ENCODE measurements at regions of chr21 and their contacts with region 1.

Region 1: DNA sequence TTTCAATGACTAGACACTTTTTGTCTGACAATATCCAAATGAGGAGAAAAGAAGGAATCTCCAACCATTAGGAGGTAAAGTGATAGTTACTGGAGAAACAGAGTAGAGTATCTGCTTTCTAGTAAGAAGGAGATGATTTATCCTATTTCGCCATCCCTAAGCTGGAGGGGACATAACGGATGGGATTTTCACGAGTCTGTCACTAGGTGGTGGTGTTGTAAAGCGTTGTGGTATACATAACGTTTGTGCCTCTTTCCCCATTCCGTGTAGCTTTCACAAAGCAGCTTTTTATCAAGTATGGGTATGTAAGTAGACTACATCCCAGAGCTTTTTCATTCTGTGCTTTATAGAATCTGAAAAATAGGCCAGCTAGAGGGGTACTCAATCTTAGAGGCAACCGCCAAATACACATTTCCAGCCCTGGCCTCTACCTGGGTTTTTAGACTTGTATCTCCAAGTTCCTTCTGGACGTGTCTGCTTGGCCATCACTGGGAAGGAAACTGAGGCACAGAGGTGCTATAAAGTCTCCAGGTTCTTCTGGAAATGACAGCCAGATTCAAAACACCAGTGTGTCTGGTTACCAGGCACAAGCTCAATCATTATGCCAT is 33.3 kb upstream of the FAM3B start:
- DNase-seq: no peak
- ATAC-seq: peak; percentile 93
- H3K4me3 Mint-ChIP-seq: no peak overlapping the region
- H3K27ac Mint-ChIP-seq: no peak overlapping the region
- H3K4me1 Mint-ChIP-seq: peaks cover 2% of the 10 kb centered on the region
- H3K27me3 Mint-ChIP-seq: no peaks in the 10 kb centered on the region
- CTCF ChIP-seq: no peak

Region 2: DNA sequence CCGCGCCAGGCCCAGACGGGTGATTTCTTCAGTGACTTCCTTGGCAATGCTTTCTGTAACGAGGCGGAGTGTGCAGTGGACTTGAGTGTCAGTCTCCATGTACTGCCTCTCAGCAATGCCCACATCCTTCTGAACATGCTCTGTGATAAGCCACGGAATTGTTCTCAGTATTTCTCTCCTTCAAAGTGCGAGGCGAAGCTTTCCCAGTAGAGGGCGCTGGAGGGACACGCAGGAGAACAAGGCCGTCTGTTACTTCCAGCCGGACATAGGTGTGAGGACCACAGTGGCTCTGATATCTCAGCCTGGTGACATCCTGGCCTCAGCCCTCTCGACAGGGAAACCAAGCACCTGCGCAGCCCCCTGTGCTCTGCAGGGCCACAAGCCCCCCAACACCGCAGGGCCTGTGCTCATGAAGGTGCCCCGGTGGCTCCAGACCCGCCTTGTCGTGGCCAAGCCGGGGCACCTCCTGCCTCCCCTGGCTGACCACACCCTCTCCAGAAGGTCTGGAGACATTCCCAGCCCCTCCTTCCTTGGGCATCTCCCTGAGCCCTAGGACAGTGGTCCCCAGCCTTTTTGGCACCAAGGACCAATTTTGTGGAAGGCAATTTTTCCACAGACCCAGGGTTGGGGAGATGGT is 161.4 kb before region 1 on chr21:
- CTCF ChIA-PET with region 1: no interaction called
- POLR2A ChIA-PET with region 1: no interaction called
- intact Hi-C with region 1: loop called (anchors 5 kb)
- DNase-seq: peak; percentile 41
- ATAC-seq: peak; percentile 31
- H3K4me3 Mint-ChIP-seq: no peak overlapping the region
- H3K27ac Mint-ChIP-seq: no peak overlapping the region
- H3K4me1 Mint-ChIP-seq: no peaks in the 10 kb centered on the region
- H3K27me3 Mint-ChIP-seq: peaks cover 5% of the 10 kb centered on the region
- CTCF ChIP-seq: no peak

Region 3: GRCh38 chr21:41196636-41197389 is 86.5 kb before region 1 on chr21:
- CTCF ChIA-PET with region 1: no interaction called
- POLR2A ChIA-PET with region 1: no interaction called
- intact Hi-C with region 1: no loop called
- DNase-seq: no peak
- ATAC-seq: no peak
- H3K4me3 Mint-ChIP-seq: no peak overlapping the region
- H3K27ac Mint-ChIP-seq: peak overlapping the region; percentile 63
- H3K4me1 Mint-ChIP-seq: peaks cover 75% of the 10 kb centered on the region
- H3K27me3 Mint-ChIP-seq: no peaks in the 10 kb centered on the region
- CTCF ChIP-seq: no peak

Region 4: DNA sequence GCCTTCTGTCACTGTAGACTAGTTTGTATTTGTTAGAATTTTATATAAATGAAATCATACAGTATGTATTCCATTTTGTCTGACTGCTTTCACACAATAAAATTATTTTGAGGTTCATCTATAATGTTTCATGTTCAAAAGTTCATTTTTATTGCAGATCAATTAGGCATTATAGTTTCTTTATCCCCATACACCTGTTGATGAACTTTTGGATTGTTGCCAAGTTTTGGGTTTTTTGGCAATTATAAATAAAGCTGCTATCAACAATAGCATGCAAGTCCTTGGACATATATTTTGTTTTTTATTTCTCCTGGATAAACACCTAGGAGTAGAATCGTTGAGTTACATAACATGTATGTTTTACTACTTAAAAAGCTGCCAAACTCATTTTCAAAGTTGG is 13.8 kb before region 1 on chr21:
- CTCF ChIA-PET with region 1: interaction called, 13 read pairs
- POLR2A ChIA-PET with region 1: no interaction called
- intact Hi-C with region 1: no loop called
- DNase-seq: no peak
- ATAC-seq: no peak
- H3K4me3 Mint-ChIP-seq: no peak overlapping the region
- H3K27ac Mint-ChIP-seq: no peak overlapping the region
- H3K4me1 Mint-ChIP-seq: peaks cover 3% of the 10 kb centered on the region
- H3K27me3 Mint-ChIP-seq: no peaks in the 10 kb centered on the region
- CTCF ChIP-seq: no peak

Region 5: GRCh38 chr21:41411449-41412089 is 128.3 kb after region 1 on chr21:
- CTCF ChIA-PET with region 1: interaction called, 10 read pairs
- POLR2A ChIA-PET with region 1: no interaction called
- intact Hi-C with region 1: no loop called
- DNase-seq: no peak
- ATAC-seq: peak; percentile 31
- H3K4me3 Mint-ChIP-seq: no peak overlapping the region
- H3K27ac Mint-ChIP-seq: no peak overlapping the region
- H3K4me1 Mint-ChIP-seq: peaks cover 5% of the 10 kb centered on the region
- H3K27me3 Mint-ChIP-seq: no peaks in the 10 kb centered on the region
- CTCF ChIP-seq: no peak

Region 6: GRCh38 chr21:41449613-41450012 is 166.3 kb after region 1 on chr21:
- CTCF ChIA-PET with region 1: interaction called, 165 read pairs
- POLR2A ChIA-PET with region 1: no interaction called
- intact Hi-C with region 1: no loop called
- DNase-seq: no peak
- ATAC-seq: no peak
- H3K4me3 Mint-ChIP-seq: no peak overlapping the region
- H3K27ac Mint-ChIP-seq: no peak overlapping the region
- H3K4me1 Mint-ChIP-seq: peaks cover 4% of the 10 kb centered on the region
- H3K27me3 Mint-ChIP-seq: no peaks in the 10 kb centered on the region
- CTCF ChIP-seq: no peak

Region 7: GRCh38 chr21:41768437-41769061 is 485.2 kb after region 1 on chr21:
- CTCF ChIA-PET with region 1: interaction called, 3 read pairs
- POLR2A ChIA-PET with region 1: no interaction called
- intact Hi-C with region 1: loop called (anchors 5 kb)
- DNase-seq: no peak
- ATAC-seq: no peak
- H3K4me3 Mint-ChIP-seq: peak overlapping the region; percentile 74
- H3K27ac Mint-ChIP-seq: no peak overlapping the region
- H3K4me1 Mint-ChIP-seq: peaks cover 22% of the 10 kb centered on the region
- H3K27me3 Mint-ChIP-seq: peaks cover 79% of the 10 kb centered on the region
- CTCF ChIP-seq: no peak

Region 8: DNA sequence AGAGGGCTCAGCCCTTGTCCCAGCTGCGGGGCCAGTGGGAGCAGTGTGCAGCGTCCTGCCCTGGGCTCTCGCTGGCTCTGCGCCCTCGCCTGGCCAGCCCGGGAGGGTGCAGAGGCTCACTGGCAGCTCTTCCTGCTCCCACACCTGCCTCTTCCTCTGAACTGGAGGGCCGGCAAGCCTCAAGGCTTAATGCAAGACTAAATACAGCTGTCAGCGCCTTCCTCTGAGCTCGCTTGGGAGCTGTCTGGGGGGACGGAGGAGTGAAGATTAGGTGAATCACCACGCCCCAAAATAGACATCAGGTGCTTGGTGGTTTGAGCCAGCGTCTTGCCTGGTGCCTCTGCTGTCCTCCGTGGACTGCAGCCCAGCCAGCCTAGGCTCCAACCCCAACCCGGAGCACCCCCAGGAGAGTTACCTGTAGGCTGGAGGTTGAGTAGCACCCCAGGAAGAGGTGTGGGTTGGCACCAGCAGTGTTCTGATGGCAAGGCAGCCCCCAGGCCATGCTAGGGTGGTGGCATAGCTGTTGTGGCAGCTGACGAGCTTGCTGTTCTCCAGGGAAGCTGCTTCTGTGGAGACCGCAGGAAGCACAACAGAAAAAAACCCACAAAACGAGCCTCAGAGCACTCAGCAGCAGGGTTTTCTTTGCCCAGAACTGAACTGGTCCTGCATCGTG is 824.7 kb after region 1 on chr21:
- CTCF ChIA-PET with region 1: interaction called, 11 read pairs
- POLR2A ChIA-PET with region 1: no interaction called
- intact Hi-C with region 1: no loop called
- DNase-seq: peak; percentile 55
- ATAC-seq: peak; percentile 88
- H3K4me3 Mint-ChIP-seq: peak overlapping the region; percentile 65
- H3K27ac Mint-ChIP-seq: peak overlapping the region; percentile 61
- H3K4me1 Mint-ChIP-seq: peaks cover 28% of the 10 kb centered on the region
- H3K27me3 Mint-ChIP-seq: no peaks in the 10 kb centered on the region
- CTCF ChIP-seq: no peak